ENCODE measurements at regions of chr2 and their contacts with region 1.

Region 1: DNA sequence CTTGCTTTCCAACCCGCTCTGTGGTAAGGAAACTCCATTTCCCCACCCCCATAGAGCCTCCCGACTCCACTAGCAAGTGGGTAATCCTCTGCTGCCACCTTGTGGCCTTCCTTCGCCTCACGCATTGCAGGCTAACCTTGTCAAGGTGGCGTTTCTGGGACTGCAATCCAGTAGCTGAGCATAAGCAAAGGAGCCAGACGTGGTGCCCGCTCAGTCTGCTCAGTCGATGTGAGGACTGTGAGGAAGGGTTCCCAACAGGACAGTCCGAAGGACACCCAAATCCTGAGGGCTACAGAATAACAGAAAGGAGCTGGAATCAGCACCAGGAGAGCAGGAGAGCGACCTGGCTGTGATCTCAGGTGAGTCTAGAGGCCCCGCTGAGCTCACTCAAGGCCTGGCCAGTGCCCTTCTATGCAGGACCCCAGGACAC is 144.2 kb downstream of the SUCLG1 start:
- DNase-seq: peak; percentile 32 to 45
- ATAC-seq: peak; percentile 66 to 78
- H3K4me3 ChIP-seq: no peak overlapping the region
- H3K27ac ChIP-seq: no peak overlapping the region
- H3K4me1 ChIP-seq: no peaks in the 10 kb centered on the region
- H3K27me3 ChIP-seq: no peaks in the 10 kb centered on the region
- CTCF ChIP-seq: peak; percentile 45 to 75 (median 62)
- POLR2A ChIP-seq: no peak

Region 2: DNA sequence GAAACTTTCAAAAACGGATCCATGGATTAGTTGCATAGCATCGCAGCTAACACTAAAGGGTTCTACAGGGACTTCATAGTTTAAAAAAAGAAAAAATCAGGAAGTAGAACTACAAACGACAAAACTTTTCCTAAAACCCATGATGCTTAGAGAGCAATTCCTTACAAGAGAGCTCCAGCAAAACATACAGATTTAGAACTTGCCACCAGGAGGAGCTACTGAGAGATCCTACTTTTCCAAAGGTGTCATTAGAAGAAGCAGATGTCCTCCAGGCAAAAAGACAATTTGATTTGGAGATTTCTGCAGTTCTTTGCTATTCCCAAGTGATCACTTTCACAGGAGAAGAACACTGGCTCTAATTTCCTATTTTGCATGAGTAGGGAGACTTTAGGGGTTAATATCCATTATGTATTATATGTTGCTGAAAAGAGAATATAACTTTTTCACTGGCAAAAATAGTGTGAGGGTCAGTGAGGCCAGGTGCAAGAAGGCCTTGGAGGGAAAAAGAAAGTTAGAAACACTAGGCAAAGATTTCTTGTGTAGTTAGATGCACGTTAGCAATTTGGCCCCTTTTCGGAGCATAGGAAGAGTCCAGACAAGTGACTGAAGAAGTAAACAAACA is 292.0 kb before region 1 on chr2:
- in situ Hi-C with region 1: no loop called
- intact Hi-C with region 1: loop called (anchors 10 kb)
- DNase-seq: no peak
- ATAC-seq: no peak
- H3K4me3 ChIP-seq: no peak overlapping the region
- H3K27ac ChIP-seq: no peak overlapping the region
- H3K4me1 ChIP-seq: no peaks in the 10 kb centered on the region
- H3K27me3 ChIP-seq: no peaks in the 10 kb centered on the region
- CTCF ChIP-seq: no peak
- POLR2A ChIP-seq: no peak